ENCODE measurements at regions of chr15 and their contacts with region 1.

Region 1: GRCh38 chr15:99282121-99282520 is 30.8 kb downstream of the LRRC28 start:
- DNase-seq: no peak
- ATAC-seq: no peak

Region 2: GRCh38 chr15:99019558-99020540 is 262.3 kb before region 1 on chr15:
- intact Hi-C with region 1: no loop called
- DNase-seq: no peak
- ATAC-seq: no peak

Region 3: GRCh38 chr15:99213187-99213811 is 68.8 kb before region 1 on chr15:
- intact Hi-C with region 1: no loop called
- DNase-seq: peak; percentile 91
- ATAC-seq: peak; percentile 93

Region 4: GRCh38 chr15:99359769-99360168 is 77.6 kb after region 1 on chr15:
- intact Hi-C with region 1: loop called (anchors 10 kb)
- DNase-seq: no peak
- ATAC-seq: no peak

Region 5: DNA sequence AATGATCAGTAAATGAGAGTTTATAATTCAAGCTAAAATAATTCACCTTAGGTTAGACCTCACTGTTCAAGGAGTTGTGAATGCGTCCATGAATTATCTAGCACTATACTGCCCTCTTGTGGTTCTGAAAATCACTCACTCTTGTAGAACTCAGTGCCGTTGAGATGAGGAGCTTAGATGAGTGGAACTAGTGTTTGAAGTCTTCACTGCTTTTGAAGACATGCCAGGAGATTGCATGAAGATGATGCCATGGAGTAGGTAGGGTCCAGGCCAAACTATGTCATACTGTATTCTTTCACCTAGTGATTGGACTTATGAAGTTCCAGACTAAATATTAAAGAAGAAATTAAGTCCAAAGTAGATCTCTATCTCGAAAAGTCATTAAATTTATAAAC is 422.3 kb after region 1 on chr15:
- intact Hi-C with region 1: loop called (anchors 5 kb)
- DNase-seq: no peak
- ATAC-seq: peak; percentile 85

Region 6: GRCh38 chr15:99755692-99756409 is 473.7 kb after region 1 on chr15:
- intact Hi-C with region 1: loop called (anchors 5 kb)
- DNase-seq: peak; percentile 50
- ATAC-seq: peak; percentile 93